ENCODE measurements at regions of chr21 and their contacts with region 1.

Region 1: GRCh38 chr21:39313571-39314142 is at the start of gene BRWD1:
- DNase-seq: peak; percentile 81 to 92
- ATAC-seq: peak; percentile 55 to 79 (median 62)
- H3K4me3 ChIP-seq: peak within 1 kb of the TSS; percentile 88
- H3K4me3 Mint-ChIP-seq: peak within 1 kb of the TSS; percentile 96
- H3K27ac ChIP-seq: peak within 1 kb of the TSS; percentile 83
- H3K27ac Mint-ChIP-seq: peak within 1 kb of the TSS; percentile 92 to 97
- H3K4me1 ChIP-seq: peaks cover 10% of the 10 kb centered on the region
- H3K4me1 Mint-ChIP-seq: peaks cover 29 to 38% of the 10 kb centered on the region in 2 donors
- H3K27me3 ChIP-seq: no peaks in the 10 kb centered on the region
- H3K27me3 Mint-ChIP-seq: no peaks in the 10 kb centered on the region
- CTCF ChIP-seq: peak; percentile 31
- total RNA-seq, gene BRWD1: 92.0 to 93.8 (median 93.3) TPM

Region 2: GRCh38 chr21:39183237-39184007 is 130.2 kb before region 1 on chr21 and contains the start of gene PSMG1:
- intact Hi-C with region 1: loop called (anchors 2 kb)
- DNase-seq: peak; percentile 92 to 96
- ATAC-seq: peak; percentile 88 to 98 (median 91)
- H3K4me3 ChIP-seq: peak within 1 kb of the TSS; percentile 83
- H3K4me3 Mint-ChIP-seq: peak within 1 kb of the TSS; percentile 98
- H3K27ac ChIP-seq: peak within 1 kb of the TSS; percentile 81
- H3K27ac Mint-ChIP-seq: peak within 1 kb of the TSS; percentile 93 to 95
- H3K4me1 ChIP-seq: peaks cover 8% of the 10 kb centered on the region
- H3K4me1 Mint-ChIP-seq: peaks cover 29 to 48% of the 10 kb centered on the region in 2 donors
- H3K27me3 ChIP-seq: no peaks in the 10 kb centered on the region
- H3K27me3 Mint-ChIP-seq: no peaks in the 10 kb centered on the region
- CTCF ChIP-seq: no peak
- total RNA-seq, gene PSMG1: 11.3 to 12.1 (median 12.0) TPM

Region 3: GRCh38 chr21:39349211-39350093 is 35.8 kb after region 1 on chr21:
- intact Hi-C with region 1: loop called (anchors 1 kb)
- DNase-seq: peak; percentile 98
- ATAC-seq: peak; percentile 78 to 91 (median 82)
- H3K4me3 ChIP-seq: peak overlapping the region; percentile 94
- H3K4me3 Mint-ChIP-seq: peak overlapping the region; percentile 94
- H3K27ac ChIP-seq: peak overlapping the region; percentile 93
- H3K27ac Mint-ChIP-seq: peak overlapping the region; percentile 89 to 90
- H3K4me1 ChIP-seq: peaks cover 6% of the 10 kb centered on the region
- H3K4me1 Mint-ChIP-seq: peaks cover 31 to 34% of the 10 kb centered on the region in 2 donors
- H3K27me3 ChIP-seq: no peaks in the 10 kb centered on the region
- H3K27me3 Mint-ChIP-seq: peaks cover 6% of the 10 kb centered on the region in 2 donors
- CTCF ChIP-seq: no peak

Region 4: GRCh38 chr21:39445321-39446269 is 131.9 kb after region 1 on chr21 and contains the start of gene LCA5L:
- intact Hi-C with region 1: loop called (anchors 1 kb)
- DNase-seq: peak; percentile 91 to 96
- ATAC-seq: peak; percentile 88 to 95 (median 91)
- H3K4me3 ChIP-seq: peak within 1 kb of the TSS; percentile 73
- H3K4me3 Mint-ChIP-seq: peak within 1 kb of the TSS; percentile 95
- H3K27ac ChIP-seq: peak within 1 kb of the TSS; percentile 95
- H3K27ac Mint-ChIP-seq: peak within 1 kb of the TSS; percentile 93 to 94
- H3K4me1 ChIP-seq: peaks cover 9% of the 10 kb centered on the region
- H3K4me1 Mint-ChIP-seq: peaks cover 11 to 15% of the 10 kb centered on the region in 2 donors
- H3K27me3 ChIP-seq: no peaks in the 10 kb centered on the region
- H3K27me3 Mint-ChIP-seq: peaks cover 22 to 41% of the 10 kb centered on the region in 2 donors
- CTCF ChIP-seq: no peak
- total RNA-seq, gene LCA5L: 0.14 to 0.84 TPM in 2 of 3 donors, not detected in the other